ENCODE measurements at regions of chr20 and their contacts with region 1.

Region 1: DNA sequence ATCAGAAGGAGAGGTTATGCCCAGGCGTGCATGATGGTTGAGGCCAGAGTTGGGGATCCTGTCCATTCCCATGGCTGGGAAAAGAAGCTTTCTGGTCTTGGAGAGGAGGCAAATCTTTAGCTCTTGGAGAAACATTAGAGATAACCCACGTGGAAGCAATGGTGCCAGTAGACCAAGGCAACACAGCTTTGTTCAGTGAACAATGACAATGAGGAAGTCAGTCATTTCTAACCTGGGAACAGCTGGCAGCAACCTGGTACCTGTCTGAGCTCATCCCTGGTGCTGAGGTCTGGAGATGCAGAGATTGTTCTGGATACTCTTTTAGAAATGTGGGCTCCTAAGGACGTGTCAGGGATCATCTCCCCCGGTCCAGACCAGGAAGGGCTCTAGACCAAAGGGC is 76.7 kb upstream of the PAX1 start:
- DNase-seq: peak; percentile 58
- H3K4me3 ChIP-seq: peak overlapping the region; percentile 28
- H3K27ac ChIP-seq: peak overlapping the region; percentile 64
- H3K4me1 ChIP-seq: peaks cover 64% of the 10 kb centered on the region
- CTCF ChIP-seq: no peak

Region 2: GRCh38 chr20:22098511-22098910 is 469.7 kb after region 1 on chr20:
- CTCF ChIA-PET with region 1: no interaction called
- POLR2A ChIA-PET with region 1: no interaction called
- intact Hi-C with region 1: loop called (anchors 2 kb)
- DNase-seq: no peak
- H3K4me3 ChIP-seq: no peak overlapping the region
- H3K27ac ChIP-seq: no peak overlapping the region
- H3K4me1 ChIP-seq: no peaks in the 10 kb centered on the region
- CTCF ChIP-seq: no peak

Measured in OCI-LY7 (cell line).